Ovary (tissue), 10 donors: ENCODE measurements at regions of chr7 and their contacts with region 1.

Region 1: GRCh38 chr7:73451780-73452398 is 18.3 kb downstream of the FZD9 start:
- DNase-seq: peak in 1 of 5 donors; percentile 38
- H3K4me3 ChIP-seq: no peak overlapping the region
- H3K27ac ChIP-seq: no peak overlapping the region
- H3K4me1 ChIP-seq: peaks cover 4% of the 10 kb centered on the region
- H3K27me3 ChIP-seq: no peaks in the 10 kb centered on the region
- CTCF ChIP-seq: peak; percentile 78 to 94 (median 92)
- EP300 ChIP-seq: no peak
- POLR2A ChIP-seq: no peak

Region 2: DNA sequence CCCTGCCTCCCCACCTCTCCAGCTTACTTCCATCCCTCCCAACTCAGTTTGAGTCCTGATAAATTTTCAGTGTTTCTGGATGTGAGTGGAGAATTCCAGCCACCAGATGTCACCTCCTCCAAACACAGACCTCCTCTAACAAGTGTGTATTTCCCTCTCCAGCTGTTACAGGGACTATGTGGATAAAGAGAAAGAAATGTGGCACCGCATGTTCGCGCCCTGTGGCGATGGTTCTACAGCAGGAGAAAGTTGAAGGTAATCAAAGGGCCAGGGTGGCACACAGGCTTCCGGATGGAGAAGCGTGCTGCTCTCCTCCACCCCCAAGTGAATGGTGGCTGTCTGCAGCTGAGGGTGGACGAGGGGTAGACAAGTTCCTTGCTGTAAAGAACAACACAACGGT is 109.2 kb before region 1 on chr7:
- intact Hi-C with region 1: loop called in 2 of 4 experiments (anchors 5 to 10 kb)
- DNase-seq: peak in 2 of 5 donors; percentile 17 to 30
- H3K4me3 ChIP-seq: peak overlapping the region; percentile 6
- H3K27ac ChIP-seq: no peak overlapping the region
- H3K4me1 ChIP-seq: peaks cover 3% of the 10 kb centered on the region
- H3K27me3 ChIP-seq: no peaks in the 10 kb centered on the region
- CTCF ChIP-seq: peak in 1 of 3 donors; percentile 22
- EP300 ChIP-seq: no peak
- POLR2A ChIP-seq: no peak